PC-9 (cell line): ENCODE measurements at regions of chr3 and their contacts with region 1.

Region 1: GRCh38 chr3:161851941-161852566 is 355.4 kb downstream of the OTOL1 start:
- DNase-seq: peak in 1 of 2 experiments; percentile 64
- H3K4me3 ChIP-seq: no peak overlapping the region
- H3K27ac ChIP-seq: no peak overlapping the region
- H3K4me1 ChIP-seq: no peaks in the 10 kb centered on the region
- H3K27me3 ChIP-seq: no peaks in the 10 kb centered on the region
- CTCF ChIP-seq: peak; percentile 90

Region 2: GRCh38 chr3:161560008-161560637 is 291.9 kb before region 1 on chr3:
- CTCF ChIA-PET with region 1: no interaction called
- POLR2A ChIA-PET with region 1: no interaction called
- intact Hi-C with region 1: loop called (anchors 2 kb)
- DNase-seq: peak in 1 of 2 experiments; percentile 46
- H3K4me3 ChIP-seq: no peak overlapping the region
- H3K27ac ChIP-seq: no peak overlapping the region
- H3K4me1 ChIP-seq: no peaks in the 10 kb centered on the region
- H3K27me3 ChIP-seq: no peaks in the 10 kb centered on the region
- CTCF ChIP-seq: peak; percentile 61

Region 3: DNA sequence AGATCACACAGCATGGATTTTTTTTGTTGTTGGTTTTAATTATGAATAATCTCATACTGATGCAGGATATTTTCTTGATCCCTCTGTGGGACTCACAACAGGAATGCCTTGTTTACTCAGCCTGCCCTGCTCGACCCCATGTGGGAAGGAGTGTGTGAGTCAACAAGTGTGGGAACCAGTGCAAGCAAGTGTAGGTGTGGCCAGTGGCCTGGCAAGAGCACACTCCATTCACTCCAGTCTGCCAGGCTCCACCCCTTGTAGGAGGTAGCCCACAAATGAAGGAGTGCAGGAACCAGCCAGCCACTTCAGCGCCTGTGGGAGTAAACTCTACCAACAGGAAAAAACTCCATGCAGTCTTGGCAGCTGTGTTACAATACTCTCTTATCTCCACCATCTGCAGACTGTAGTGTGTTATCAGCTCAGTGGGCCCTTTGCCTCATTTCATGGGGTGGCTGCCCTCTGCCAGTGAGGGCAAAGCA is 38.1 kb after region 1 on chr3:
- CTCF ChIA-PET with region 1: no interaction called
- POLR2A ChIA-PET with region 1: interaction called, 5 read pairs
- intact Hi-C with region 1: loop called (anchors 1 kb)
- DNase-seq: peak; percentile 68 to 83
- H3K4me3 ChIP-seq: no peak overlapping the region
- H3K27ac ChIP-seq: no peak overlapping the region
- H3K4me1 ChIP-seq: 0 out of 2 replicates have a peak, but pooled peaks cover 5% of the 10 kb centered on the region
- H3K27me3 ChIP-seq: no peaks in the 10 kb centered on the region
- CTCF ChIP-seq: no peak

Region 4: DNA sequence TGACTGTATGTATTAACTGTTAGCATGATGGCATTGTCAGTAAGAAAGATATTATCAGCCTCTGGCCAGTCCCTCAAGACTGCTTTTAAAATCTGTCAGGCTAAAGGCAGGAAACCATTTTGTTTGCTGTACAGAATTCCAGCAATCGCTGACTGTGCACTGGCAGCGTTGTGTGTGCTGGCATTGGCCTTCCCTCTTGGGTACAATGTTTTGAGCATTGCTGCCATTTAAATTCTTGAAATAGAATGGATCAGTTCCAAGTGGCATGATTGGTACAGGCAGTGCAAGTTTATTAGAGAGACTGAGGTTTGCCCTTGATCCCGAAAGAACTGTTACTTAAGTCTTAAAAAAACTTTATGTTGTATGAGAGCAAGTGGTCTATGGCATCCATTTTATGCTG is 433.2 kb after region 1 on chr3:
- CTCF ChIA-PET with region 1: no interaction called
- POLR2A ChIA-PET with region 1: no interaction called
- intact Hi-C with region 1: loop called (anchors 5 kb)
- DNase-seq: no peak
- H3K4me3 ChIP-seq: no peak overlapping the region
- H3K27ac ChIP-seq: no peak overlapping the region
- H3K4me1 ChIP-seq: no peaks in the 10 kb centered on the region
- H3K27me3 ChIP-seq: no peaks in the 10 kb centered on the region
- CTCF ChIP-seq: no peak

Region 5: DNA sequence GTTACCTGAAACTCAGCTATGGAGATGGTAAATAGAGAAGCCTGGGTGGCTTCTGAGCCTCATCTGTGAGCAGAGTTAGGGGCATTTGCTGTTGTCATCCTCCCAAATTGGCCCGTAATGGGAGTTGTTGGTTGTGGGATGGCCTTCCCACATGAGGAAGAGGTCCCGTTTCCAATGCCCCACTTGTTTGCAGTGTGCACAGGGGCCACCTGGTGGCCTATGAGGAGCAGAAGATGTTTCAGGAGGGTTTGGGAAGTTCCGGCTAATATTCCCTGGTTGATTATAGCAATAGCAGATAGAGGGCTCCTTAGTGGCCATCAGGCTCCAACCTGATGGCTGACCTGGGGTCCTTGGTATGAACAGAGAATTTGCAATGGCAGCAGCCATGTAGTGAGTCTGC is 1191.0 kb after region 1 on chr3:
- CTCF ChIA-PET with region 1: no interaction called
- POLR2A ChIA-PET with region 1: no interaction called
- intact Hi-C with region 1: loop called (anchors 5 kb)
- DNase-seq: no peak
- H3K4me3 ChIP-seq: no peak overlapping the region
- H3K27ac ChIP-seq: no peak overlapping the region
- H3K4me1 ChIP-seq: no peaks in the 10 kb centered on the region
- H3K27me3 ChIP-seq: no peaks in the 10 kb centered on the region
- CTCF ChIP-seq: peak; percentile 51

Region 6: GRCh38 chr3:163490119-163490518 is 1638.1 kb after region 1 on chr3:
- CTCF ChIA-PET with region 1: no interaction called
- POLR2A ChIA-PET with region 1: no interaction called
- intact Hi-C with region 1: loop called (anchors 5 kb)
- DNase-seq: peak; percentile 36 to 50
- H3K4me3 ChIP-seq: no peak overlapping the region
- H3K27ac ChIP-seq: no peak overlapping the region
- H3K4me1 ChIP-seq: no peaks in the 10 kb centered on the region
- H3K27me3 ChIP-seq: no peaks in the 10 kb centered on the region
- CTCF ChIP-seq: peak; percentile 80